ENCODE measurements at regions of chr3 and their contacts with region 1.

Region 1: DNA sequence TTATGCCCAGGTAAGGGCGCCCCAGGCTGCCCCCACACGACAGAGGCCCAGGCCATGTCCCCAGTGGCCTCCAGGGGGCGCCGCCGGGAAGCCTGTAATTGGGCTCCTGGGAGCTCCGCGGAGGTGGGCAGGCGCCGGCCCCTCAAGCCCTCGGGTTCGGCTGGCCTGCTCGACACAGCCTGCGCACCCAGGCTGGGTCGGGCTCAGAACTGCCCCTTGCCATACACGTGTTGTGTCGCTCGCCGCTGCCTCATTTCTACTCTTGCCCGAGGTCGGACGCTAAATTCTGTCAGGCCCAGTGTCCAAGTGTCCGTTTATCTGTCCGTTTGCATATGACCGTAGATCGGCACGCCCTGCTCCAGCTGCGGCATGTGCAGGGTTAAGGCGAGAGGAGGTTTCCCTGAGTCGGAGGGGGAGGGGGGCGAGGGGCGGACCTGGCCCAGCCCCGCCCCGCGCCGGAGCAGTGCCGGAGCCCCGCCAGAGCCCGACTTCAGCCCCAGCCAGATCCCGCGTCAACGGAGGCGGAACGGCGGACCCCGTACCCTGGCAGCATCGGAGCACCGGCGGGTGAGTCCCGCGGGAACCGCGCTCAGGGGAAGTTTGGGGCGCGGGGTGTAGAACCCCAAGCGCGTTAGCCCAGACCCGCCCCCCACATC is at the start of gene KLHDC8B:
- DNase-seq: peak; percentile 81
- H3K4me3 Mint-ChIP-seq: peak within 1 kb of the TSS; percentile 71
- H3K27ac Mint-ChIP-seq: peak within 1 kb of the TSS; percentile 75
- H3K4me1 Mint-ChIP-seq: peaks cover 19% of the 10 kb centered on the region
- H3K27me3 Mint-ChIP-seq: no peaks in the 10 kb centered on the region
- total RNA-seq, gene KLHDC8B: 1.5 to 1.7 TPM

Region 2: DNA sequence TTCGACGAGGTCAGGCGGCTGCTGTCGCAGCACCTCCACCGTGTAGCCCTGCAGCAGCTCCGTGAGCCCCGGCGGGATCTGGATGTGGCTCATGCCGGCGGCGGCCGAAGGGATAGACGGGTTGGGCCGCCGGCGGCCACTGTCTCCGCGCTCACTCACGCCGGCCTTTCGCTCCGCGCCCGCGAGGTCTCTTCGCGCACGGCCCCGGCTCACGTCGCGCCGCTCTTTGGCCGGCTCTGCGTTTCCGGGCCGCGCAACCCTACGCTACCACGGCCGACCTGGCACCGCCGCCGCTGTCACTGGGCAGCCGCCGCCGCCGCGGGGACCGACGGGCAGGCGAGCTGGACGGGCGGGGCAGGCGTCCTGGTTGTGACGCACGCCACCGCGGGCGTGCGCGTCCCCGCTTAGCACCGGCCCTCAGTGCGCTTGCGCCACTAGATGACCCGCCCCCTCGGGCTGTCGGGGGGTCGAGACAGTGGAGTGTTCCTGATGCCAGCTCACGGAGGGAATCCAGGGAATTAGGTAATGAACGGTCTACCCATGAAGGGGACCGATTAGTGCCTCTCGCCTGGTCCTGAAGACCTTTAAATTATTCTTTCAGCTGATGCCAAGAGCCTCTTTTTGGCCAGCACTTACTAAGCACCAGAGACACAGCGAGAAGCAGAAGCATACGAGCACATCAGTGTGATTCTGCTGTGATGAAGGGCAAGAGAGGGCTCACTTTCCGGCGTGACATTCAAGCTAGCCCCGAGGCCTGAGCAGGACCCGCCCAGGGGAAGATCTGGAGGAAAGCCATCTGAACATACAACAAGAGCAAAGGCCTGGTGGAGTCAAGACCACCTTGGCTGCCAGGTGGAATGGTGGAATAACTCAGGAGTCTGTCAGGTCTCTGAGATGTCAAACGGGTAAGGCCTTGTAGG is 323.5 kb before region 1 on chr3 and contains the start of gene PRKAR2A:
- CTCF ChIA-PET with region 1: no interaction called
- POLR2A ChIA-PET with region 1: no interaction called
- DNase-seq: peak; percentile 69
- H3K4me3 Mint-ChIP-seq: peak within 1 kb of the TSS; percentile 80
- H3K27ac Mint-ChIP-seq: peak within 1 kb of the TSS; percentile 87
- H3K4me1 Mint-ChIP-seq: peaks cover 25% of the 10 kb centered on the region
- H3K27me3 Mint-ChIP-seq: no peaks in the 10 kb centered on the region
- total RNA-seq, gene PRKAR2A: 26.4 to 27.2 TPM

Region 3: DNA sequence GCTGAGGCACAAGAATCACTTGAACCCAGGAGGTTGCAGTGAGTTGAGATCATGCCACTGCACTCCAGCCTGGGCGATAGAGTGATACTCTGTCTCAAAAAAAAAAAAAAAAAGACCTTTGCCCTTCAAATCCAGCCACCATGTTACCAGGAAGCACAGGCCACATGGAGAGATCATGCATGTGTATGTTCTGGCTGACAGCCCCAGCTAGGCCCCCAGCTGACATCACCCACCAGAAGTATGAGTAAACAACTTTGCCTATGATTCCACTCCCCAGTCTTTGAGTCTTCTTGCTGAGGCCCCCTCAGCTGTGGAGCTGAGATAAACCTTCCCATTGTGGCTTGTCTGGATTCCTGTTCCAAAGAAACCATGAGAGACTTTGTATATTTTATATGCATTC is 256.0 kb before region 1 on chr3:
- CTCF ChIA-PET with region 1: no interaction called
- POLR2A ChIA-PET with region 1: no interaction called
- DNase-seq: no peak
- H3K4me3 Mint-ChIP-seq: no peak overlapping the region
- H3K27ac Mint-ChIP-seq: no peak overlapping the region
- H3K4me1 Mint-ChIP-seq: peaks cover 18% of the 10 kb centered on the region
- H3K27me3 Mint-ChIP-seq: no peaks in the 10 kb centered on the region

Region 4: GRCh38 chr3:49148159-49148558 is 23.1 kb before region 1 on chr3:
- CTCF ChIA-PET with region 1: no interaction called
- POLR2A ChIA-PET with region 1: no interaction called
- DNase-seq: no peak
- H3K4me3 Mint-ChIP-seq: no peak overlapping the region
- H3K27ac Mint-ChIP-seq: no peak overlapping the region
- H3K4me1 Mint-ChIP-seq: no peaks in the 10 kb centered on the region
- H3K27me3 Mint-ChIP-seq: no peaks in the 10 kb centered on the region

Region 5: GRCh38 chr3:49158108-49158709 is 13.0 kb before region 1 on chr3:
- CTCF ChIA-PET with region 1: interaction called, 12 read pairs
- POLR2A ChIA-PET with region 1: no interaction called
- DNase-seq: peak; percentile 76
- H3K4me3 Mint-ChIP-seq: no peak overlapping the region
- H3K27ac Mint-ChIP-seq: no peak overlapping the region
- H3K4me1 Mint-ChIP-seq: peaks cover 17% of the 10 kb centered on the region
- H3K27me3 Mint-ChIP-seq: no peaks in the 10 kb centered on the region

Region 6: GRCh38 chr3:49181351-49181750 is 10.1 kb after region 1 on chr3:
- CTCF ChIA-PET with region 1: interaction called, 27 read pairs
- POLR2A ChIA-PET with region 1: no interaction called
- DNase-seq: no peak
- H3K4me3 Mint-ChIP-seq: no peak overlapping the region
- H3K27ac Mint-ChIP-seq: no peak overlapping the region
- H3K4me1 Mint-ChIP-seq: no peaks in the 10 kb centered on the region
- H3K27me3 Mint-ChIP-seq: peaks cover 14% of the 10 kb centered on the region

Region 7: GRCh38 chr3:49339945-49340800 is 168.9 kb after region 1 on chr3 and contains the start of gene USP4:
- CTCF ChIA-PET with region 1: no interaction called
- POLR2A ChIA-PET with region 1: no interaction called
- DNase-seq: peak; percentile 95
- H3K4me3 Mint-ChIP-seq: peak within 1 kb of the TSS; percentile 92
- H3K27ac Mint-ChIP-seq: peak within 1 kb of the TSS; percentile 97
- H3K4me1 Mint-ChIP-seq: peaks cover 47% of the 10 kb centered on the region
- H3K27me3 Mint-ChIP-seq: no peaks in the 10 kb centered on the region
- total RNA-seq, gene USP4: 87.1 to 88.4 TPM